ENCODE measurements at regions of chr5 and their contacts with region 1.

Region 1: GRCh38 chr5:161535762-161536161 is 10.8 kb downstream of the GABRB2 start:
- DNase-seq: peak; percentile 42
- H3K4me3 ChIP-seq: no peak overlapping the region
- H3K27ac ChIP-seq: no peak overlapping the region
- H3K4me1 ChIP-seq: no peaks in the 10 kb centered on the region
- H3K27me3 ChIP-seq: no peaks in the 10 kb centered on the region
- CTCF ChIP-seq: peak in 1 of 3 experiments; percentile 8
- POLR2A ChIP-seq: no peak

Region 2: DNA sequence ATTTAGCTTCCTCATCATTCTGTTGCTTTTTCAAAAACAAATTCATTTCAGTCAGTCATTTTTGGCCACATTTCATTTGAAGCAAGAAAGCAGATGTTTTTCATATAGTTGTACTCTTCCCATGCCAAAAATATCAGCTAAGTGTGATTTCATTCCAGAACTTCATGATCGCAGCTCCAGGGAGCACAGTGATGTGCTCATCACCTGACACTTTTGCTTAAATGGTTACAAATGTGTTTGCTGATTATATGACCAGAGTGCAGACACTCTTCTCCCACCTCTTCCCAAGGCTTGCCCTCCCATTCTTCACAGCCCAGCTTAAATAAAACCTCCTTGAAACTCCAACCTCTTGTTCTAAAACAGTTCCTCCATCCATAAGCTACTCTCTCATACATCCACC is 21.8 kb before region 1 on chr5:
- intact Hi-C with region 1: loop called (anchors 2 kb)
- DNase-seq: no peak
- H3K4me3 ChIP-seq: no peak overlapping the region
- H3K27ac ChIP-seq: no peak overlapping the region
- H3K4me1 ChIP-seq: no peaks in the 10 kb centered on the region
- H3K27me3 ChIP-seq: no peaks in the 10 kb centered on the region
- CTCF ChIP-seq: no peak
- POLR2A ChIP-seq: no peak

Region 3: DNA sequence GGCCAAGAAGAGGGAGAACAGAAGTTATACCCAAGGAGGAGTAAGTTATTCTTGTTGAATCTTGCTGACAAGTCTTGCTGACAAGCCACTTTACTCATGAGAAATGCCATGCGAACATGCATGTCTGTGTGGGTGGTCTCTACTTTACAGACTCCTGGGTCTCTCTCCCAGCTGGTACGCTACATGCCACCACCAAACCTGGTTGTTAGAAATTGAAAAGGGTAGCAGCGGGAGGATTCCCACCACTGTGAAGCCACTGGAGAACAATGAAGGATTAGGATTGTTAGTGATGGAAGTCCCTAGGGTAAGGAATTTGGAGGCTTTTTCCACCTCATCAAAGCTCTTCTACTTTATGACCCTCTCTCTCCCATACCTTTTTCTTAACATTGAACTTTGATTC is 64.4 kb after region 1 on chr5:
- intact Hi-C with region 1: no loop called
- DNase-seq: no peak
- H3K4me3 ChIP-seq: no peak overlapping the region
- H3K27ac ChIP-seq: no peak overlapping the region
- H3K4me1 ChIP-seq: no peaks in the 10 kb centered on the region
- H3K27me3 ChIP-seq: no peaks in the 10 kb centered on the region
- CTCF ChIP-seq: no peak
- POLR2A ChIP-seq: no peak